ENCODE measurements at regions of chr7 and their contacts with region 1.

Region 1: GRCh38 chr7:11416641-11417458 is 415.1 kb downstream of the THSD7A start:
- DNase-seq: no peak
- H3K4me3 ChIP-seq: no peak overlapping the region
- H3K27ac ChIP-seq: no peak overlapping the region
- H3K4me1 ChIP-seq: 0 out of 2 replicates have a peak, but pooled peaks cover 4% of the 10 kb centered on the region
- H3K27me3 ChIP-seq: no peaks in the 10 kb centered on the region
- CTCF ChIP-seq: no peak

Region 2: DNA sequence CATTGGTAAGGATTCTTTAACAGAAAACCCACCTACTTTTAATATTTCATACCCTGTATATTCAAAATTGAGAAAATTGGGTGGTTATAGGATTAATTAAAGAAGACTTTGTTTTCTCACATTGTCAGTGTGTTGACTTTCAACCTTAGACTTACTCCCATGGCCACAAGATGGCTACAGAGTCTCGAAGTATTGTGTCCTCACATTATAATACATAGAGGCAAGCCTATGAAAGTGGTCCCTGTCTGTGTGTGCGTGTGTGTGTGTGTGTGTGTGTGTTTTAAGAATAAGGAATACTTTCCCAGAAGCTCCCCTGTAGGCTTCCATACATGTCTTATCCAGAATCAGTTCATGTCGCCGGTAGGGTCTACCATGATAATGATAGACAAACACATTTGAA is 263.2 kb before region 1 on chr7:
- CTCF ChIA-PET with region 1: no interaction called
- POLR2A ChIA-PET with region 1: no interaction called
- intact Hi-C with region 1: no loop called
- DNase-seq: no peak
- H3K4me3 ChIP-seq: no peak overlapping the region
- H3K27ac ChIP-seq: no peak overlapping the region
- H3K4me1 ChIP-seq: no peaks in the 10 kb centered on the region
- H3K27me3 ChIP-seq: no peaks in the 10 kb centered on the region
- CTCF ChIP-seq: no peak

Region 3: GRCh38 chr7:11776039-11776438 is 359.2 kb after region 1 on chr7:
- CTCF ChIA-PET with region 1: no interaction called
- POLR2A ChIA-PET with region 1: interaction called, 24 read pairs
- intact Hi-C with region 1: no loop called
- DNase-seq: no peak
- H3K4me3 ChIP-seq: no peak overlapping the region
- H3K27ac ChIP-seq: no peak overlapping the region
- H3K4me1 ChIP-seq: no peaks in the 10 kb centered on the region
- H3K27me3 ChIP-seq: no peaks in the 10 kb centered on the region
- CTCF ChIP-seq: no peak

Region 4: DNA sequence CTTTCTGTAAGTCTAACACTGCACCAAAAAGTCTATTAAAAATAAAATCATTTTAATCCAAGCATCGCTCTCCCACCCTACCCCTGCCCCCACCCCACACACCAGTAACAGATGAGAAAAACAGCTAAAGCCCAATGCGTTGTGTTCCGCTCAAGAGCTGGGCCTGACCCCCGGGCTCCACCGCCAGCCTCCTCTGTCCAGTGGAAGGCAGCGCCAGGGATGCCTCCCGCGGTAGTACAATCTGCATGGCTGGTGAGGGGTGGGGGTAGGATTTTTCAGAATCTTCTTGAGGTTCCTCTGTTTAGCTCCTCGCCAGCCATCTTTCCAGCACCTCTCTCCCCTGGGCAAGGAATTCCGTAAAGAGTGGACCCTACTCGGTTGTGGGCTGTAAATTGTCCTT is 403.1 kb after region 1 on chr7:
- CTCF ChIA-PET with region 1: no interaction called
- POLR2A ChIA-PET with region 1: no interaction called
- intact Hi-C with region 1: no loop called
- DNase-seq: no peak
- H3K4me3 ChIP-seq: no peak overlapping the region
- H3K27ac ChIP-seq: no peak overlapping the region
- H3K4me1 ChIP-seq: no peaks in the 10 kb centered on the region
- H3K27me3 ChIP-seq: no peaks in the 10 kb centered on the region
- CTCF ChIP-seq: no peak